Dendritic cell treated with granulocyte-macrophage colony-stimulating factor and Interleukin-4, amounts not matched to agents 40 ng/mL and 50 ng/mL, for 4 days (primary cell): ENCODE measurements at regions of chrX and their contacts with region 1.

Region 1: GRCh38 chrX:122464341-122464740 is 719.7 kb upstream of the GRIA3 start:
- H3K4me3 Mint-ChIP-seq: no peak overlapping the region
- H3K27ac Mint-ChIP-seq: no peak overlapping the region
- H3K4me1 Mint-ChIP-seq: no peaks in the 10 kb centered on the region
- H3K27me3 Mint-ChIP-seq: no peaks in the 10 kb centered on the region

Region 2: GRCh38 chrX:122501652-122502051 is 37.3 kb after region 1 on chrX:
- intact Hi-C with region 1: loop called (anchors 2 kb)
- H3K4me3 Mint-ChIP-seq: no peak overlapping the region
- H3K27ac Mint-ChIP-seq: no peak overlapping the region
- H3K4me1 Mint-ChIP-seq: no peaks in the 10 kb centered on the region
- H3K27me3 Mint-ChIP-seq: no peaks in the 10 kb centered on the region

Region 3: DNA sequence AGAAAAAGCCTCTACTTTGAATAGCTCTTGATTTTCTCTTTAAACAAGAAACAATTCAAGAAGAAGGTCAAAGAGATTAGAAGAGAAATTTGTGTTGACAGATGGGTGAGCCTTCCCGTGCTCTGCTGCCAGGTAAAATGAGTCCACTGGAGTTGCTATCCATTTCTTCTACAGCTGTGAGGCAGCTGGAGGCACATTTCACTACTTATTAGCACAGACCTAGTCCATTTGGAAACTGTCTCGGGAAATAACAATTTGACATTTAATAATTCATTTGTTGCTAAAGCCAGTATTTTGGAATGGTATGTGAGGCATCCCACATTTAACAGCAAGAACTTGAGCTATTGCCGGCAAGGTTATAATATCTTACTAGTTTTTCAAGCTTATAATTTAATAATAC is 322.9 kb after region 1 on chrX:
- intact Hi-C with region 1: no loop called
- H3K4me3 Mint-ChIP-seq: no peak overlapping the region
- H3K27ac Mint-ChIP-seq: no peak overlapping the region
- H3K4me1 Mint-ChIP-seq: no peaks in the 10 kb centered on the region
- H3K27me3 Mint-ChIP-seq: no peaks in the 10 kb centered on the region